Right ventricle myocardium inferior (tissue), 1 donor: ENCODE measurements at regions of chr7 and their contacts with region 1.

Region 1: DNA sequence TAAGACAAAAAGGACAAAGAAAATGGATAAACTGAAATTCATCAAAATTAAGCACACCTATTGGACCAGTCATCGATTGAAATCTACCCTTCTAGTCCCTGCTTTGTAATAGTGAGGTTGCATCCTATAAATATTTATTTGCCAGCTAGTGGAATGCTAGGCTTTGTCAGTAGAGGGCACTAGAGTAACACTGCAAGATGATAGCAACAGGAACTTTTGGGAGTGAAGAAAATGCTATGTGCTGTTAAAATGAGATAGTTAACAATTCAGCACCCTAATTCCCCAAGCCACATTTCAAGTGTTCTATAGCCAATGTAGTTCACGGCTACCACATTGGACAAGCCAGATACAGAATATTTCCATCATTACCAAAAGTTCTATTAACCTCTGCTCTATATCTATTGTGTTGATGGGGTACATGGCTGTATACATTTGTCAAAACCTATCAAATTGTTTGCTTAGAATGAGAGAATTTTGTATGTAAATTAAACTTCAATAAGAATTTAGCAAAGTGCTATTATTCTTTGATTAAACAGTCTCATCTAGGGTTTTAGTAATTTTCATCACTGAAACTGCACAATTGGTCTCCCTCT is 69.8 kb downstream of the LSMEM1 start:
- DNase-seq: no peak
- ATAC-seq: no peak

Region 2: DNA sequence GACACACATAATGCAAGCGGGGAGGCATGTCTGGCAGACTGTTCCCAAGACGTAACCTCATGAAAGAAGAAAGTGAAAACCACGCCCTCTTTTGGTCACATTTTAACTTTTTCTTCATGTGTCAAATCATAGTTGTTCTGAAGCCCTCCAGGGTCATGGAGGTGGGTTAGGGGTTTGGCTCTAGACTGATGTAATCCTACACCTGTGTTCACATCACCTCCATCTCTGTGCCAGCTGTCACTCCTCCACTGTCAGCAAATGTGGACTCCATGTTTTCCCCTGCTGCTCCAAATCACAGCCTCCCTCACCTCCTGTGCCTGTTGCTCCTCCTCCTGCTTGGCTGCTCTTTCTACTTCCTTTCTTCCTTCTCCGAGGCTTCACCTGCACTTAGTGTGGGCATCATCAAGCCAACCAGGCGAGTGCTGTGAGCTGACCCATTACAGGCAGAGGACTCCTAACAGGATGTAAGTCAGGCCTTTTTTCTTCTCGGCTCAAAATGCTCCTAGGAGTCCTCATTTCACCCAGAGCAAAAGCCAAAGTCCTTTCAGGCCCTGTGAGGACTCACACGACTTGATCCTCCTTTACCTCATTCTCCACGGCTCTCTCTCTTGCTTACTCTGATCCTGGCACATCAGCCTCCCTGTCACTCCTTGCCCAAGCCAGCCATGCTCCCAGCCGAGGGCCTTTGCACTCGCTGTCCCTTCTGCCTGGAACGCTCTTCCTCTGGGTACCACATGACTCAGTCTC is 166.7 kb before region 1 on chr7:
- intact Hi-C with region 1: no loop called
- DNase-seq: no peak
- ATAC-seq: no peak

Region 3: GRCh38 chr7:112400141-112400540 is 150.4 kb before region 1 on chr7:
- intact Hi-C with region 1: no loop called
- DNase-seq: no peak
- ATAC-seq: no peak

Region 4: GRCh38 chr7:112495810-112496462 is 54.6 kb before region 1 on chr7:
- intact Hi-C with region 1: no loop called
- DNase-seq: no peak
- ATAC-seq: peak; percentile 88

Region 5: DNA sequence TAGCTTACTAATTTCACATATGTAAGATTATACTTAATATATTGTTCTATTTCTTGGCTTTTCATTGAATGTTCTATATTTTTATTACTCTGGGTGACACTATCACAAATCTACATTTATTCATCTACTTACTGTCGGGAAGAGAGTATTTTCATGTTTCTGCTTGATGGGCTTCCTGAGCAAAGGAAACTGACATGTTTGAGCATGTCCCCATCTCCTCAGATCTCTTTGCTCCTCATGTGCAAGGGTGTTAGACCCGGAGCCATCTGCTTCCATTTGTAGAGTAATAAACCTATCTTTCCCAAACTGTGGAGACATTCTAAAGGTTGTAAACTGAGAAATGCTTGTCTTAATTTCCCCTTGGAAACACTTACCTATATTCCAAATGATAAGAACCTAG is 33.7 kb after region 1 on chr7:
- intact Hi-C with region 1: no loop called
- DNase-seq: no peak
- ATAC-seq: no peak

Region 6: GRCh38 chr7:112898432-112899290 is 348.1 kb after region 1 on chr7:
- intact Hi-C with region 1: loop called (anchors 1 kb)
- DNase-seq: no peak
- ATAC-seq: peak; percentile 78

Region 7: GRCh38 chr7:113421696-113422330 is 871.2 kb after region 1 on chr7:
- intact Hi-C with region 1: loop called (anchors 1 kb)
- DNase-seq: peak; percentile 79
- ATAC-seq: peak; percentile 82